G401 (cell line): ENCODE measurements at regions of chr17 and their contacts with region 1.

Region 1: DNA sequence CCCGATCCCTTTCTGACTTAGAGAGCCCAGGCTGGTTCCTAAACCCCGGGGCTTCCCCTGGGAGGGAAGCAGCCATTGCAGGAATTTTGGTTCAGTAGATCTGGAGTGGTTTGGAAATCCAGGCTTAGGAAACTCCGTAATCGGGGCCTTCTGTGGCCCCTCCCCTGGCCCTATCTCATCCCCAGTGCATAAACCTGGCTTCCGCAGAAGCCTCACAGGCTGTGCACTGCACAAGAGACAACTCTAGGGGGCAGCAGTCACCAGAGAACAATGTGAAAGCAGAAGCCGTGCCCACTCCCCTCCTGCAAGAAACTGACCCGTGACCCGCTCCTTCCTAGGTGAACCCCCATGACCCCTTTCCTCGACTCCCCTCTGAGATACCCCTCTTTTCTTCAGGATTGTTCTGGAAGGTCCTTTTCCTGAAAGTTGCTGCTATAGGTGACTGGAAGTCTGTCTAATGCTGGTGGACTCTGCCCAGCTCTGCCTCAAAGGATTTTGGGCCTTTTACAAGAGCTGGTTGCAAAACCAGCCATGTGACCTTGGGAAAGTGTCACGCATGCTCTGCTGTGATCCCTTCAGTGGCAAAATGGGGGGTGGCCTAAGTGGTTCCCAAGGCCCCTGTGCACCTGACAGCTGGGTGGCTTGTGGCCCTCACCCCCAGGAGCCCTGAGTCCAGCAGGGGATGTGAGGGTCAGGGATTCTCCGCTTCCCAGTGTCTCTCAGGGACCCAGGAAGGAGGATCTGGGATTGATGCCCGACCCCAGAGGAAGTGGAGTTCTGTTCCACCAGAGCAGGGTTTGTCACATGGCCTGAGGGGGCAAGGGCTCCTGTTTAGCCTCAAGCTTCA is 14.4 kb downstream of the GUCY2D start:
- DNase-seq: peak; percentile 50

Region 2: DNA sequence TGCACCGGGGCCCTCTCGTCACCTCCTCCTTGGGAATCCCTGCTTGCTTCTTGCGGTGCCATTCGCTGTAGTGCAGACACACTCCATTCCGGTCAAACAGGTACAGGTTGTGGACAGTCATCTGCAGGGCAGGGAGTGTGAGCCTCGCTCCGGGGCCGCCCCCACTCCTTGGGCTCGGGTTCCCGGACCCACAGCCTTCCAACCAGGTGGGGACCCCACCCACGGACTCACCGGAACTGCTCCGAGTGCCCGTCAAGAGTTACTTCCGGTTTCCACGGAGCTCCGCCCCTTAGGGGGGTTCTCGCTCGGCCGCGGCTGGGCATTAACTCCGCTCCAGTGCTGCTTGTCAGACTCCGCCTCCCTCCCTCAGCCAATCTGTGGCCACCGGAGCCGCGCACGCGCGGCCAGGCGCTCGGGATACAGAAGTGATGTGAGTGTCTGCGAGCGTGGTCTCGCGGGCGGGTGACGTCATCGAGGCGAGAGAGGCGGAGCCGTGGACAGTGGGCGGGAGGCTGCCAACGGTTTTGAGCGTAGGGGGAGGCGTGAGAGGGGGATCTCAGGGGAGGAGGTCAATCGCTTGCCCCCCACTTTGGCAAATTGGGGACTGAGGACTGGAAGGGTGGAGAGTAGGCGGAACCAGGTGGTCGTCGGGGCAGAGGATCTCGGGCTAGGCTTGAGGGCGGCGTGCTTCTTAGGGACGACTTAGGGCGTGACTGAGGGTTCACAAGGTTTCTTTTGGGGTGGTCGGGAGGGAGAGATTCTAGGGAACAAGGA is 85.0 kb before region 1 on chr17 and contains the starts of genes CNTROB and TRAPPC1:
- in situ Hi-C with region 1: loop called (anchors 5 kb)
- DNase-seq: peak; percentile 99
- total RNA-seq, gene CNTROB: 25.4 and 29.3 TPM in 2 replicates
- total RNA-seq, gene TRAPPC1: 6.1 and 7.8 TPM in 2 replicates